HEK293 (cell line): ENCODE measurements at regions of chr17 and their contacts with region 1.

Region 1: GRCh38 chr17:82494236-82495055 is 25.1 kb upstream of the FOXK2 start:
- H3K4me3 ChIP-seq: peak overlapping the region; percentile 25
- H3K27ac ChIP-seq: peak overlapping the region; percentile 0; the same call in 1 of the 2 replicates
- H3K4me1 ChIP-seq: peaks cover 2% of the 10 kb centered on the region; the same call in 1 of the 2 replicates
- CTCF ChIP-seq: peak; percentile 100

Region 2: DNA sequence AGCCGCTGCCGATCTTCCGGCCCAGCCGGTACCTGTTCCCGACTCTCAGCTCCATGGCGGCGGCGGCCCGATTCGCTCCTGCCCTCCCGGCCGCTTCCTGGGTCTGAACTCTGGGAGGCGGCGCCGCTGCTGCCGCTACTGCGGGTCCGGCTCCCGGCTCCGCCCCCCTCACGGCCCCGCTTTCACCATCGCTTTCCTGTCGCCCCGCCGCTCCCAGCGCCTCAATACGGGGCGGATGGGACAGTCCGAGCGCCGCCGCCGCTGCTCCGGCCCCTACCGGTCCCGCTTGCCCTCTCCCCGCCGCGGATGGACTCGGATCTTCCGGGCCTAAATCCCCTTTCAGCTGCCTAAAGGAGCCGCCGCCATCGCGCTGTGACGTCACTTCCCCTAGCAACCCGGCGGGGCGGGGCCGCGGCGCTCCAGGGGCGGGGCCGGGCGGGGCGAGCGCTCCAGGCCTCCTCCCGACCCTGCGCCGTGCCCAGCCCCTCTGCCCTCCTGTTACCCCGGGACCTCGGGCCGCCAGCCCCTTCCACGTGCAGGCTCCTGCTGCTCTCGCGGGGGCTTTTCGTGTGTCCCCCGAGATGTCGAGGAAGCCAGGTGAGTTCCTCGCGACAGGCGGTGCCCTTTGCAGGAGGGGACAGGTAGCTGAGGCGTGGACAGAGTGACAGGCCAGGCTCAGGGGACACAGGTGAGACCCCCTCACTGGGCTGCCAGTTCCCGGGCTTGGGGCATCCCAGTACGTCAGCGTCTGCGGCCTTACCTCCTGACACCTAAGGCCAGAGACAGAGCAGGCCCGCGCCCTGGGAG is 220.9 kb before region 1 on chr17 and contains the start of gene CSNK1D:
- CTCF ChIA-PET with region 1: no interaction called
- POLR2A ChIA-PET with region 1: no interaction called
- H3K4me3 ChIP-seq: peak within 1 kb of the TSS; percentile 87
- H3K27ac ChIP-seq: peak within 1 kb of the TSS; percentile 100
- H3K4me1 ChIP-seq: peaks cover 19% of the 10 kb centered on the region
- CTCF ChIP-seq: peak; percentile 62

Region 3: DNA sequence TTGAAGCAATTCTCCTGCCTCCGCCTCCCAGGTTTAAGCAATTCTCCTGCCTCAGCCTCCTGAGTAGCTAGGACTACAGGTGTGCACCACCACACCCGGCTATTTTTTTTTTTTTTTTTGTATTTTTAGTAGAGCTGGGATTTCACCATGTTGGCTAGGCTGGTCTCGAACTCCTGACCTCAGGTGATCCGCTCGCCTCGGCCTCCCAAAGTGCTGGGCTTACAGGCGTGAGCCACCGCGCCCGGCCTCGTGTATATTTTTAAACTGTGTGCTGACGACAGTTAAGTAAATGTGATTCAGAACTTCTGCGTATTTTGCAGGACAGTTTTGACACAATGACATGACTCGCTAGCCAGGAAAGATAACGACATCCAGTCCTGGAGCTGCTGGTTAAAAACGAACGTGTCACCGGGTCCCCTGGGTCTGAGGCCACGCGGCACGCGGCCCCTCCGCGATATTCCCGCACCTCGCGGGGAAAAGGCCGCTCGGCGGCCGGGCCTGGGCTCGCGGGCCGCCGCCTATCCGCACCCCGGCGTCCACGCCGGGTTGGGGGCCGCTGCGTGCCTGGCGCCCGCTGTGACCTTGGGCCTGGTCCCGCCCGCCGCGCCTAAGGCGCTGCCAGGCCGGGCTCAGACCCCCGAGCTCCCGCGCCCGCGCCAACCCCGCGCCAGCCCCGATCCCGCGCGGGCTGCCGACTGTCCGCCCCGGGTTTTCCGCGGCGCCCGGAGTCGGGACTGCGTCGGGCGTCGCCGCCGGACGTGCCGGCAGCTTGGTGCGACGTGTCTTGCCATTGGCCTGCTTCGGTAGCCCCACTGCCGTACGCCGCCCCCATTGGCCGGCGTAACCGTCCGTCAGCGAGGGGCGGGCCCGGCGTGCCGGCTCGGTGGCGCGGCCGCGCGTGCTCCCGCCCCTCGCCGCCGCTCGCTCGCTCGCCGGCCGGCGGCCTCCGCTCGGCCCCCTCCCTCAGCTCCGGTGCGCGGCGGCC is 24.7 kb after region 1 on chr17 and contains the start of gene FOXK2:
- CTCF ChIA-PET with region 1: interaction called, 7 read pairs
- POLR2A ChIA-PET with region 1: interaction called, 13 read pairs
- H3K4me3 ChIP-seq: peak within 1 kb of the TSS; percentile 64
- H3K27ac ChIP-seq: peak within 1 kb of the TSS; percentile 91
- H3K4me1 ChIP-seq: peaks cover 4% of the 10 kb centered on the region
- CTCF ChIP-seq: no peak